ENCODE measurements at regions of chr6 and their contacts with region 1.

Region 1: DNA sequence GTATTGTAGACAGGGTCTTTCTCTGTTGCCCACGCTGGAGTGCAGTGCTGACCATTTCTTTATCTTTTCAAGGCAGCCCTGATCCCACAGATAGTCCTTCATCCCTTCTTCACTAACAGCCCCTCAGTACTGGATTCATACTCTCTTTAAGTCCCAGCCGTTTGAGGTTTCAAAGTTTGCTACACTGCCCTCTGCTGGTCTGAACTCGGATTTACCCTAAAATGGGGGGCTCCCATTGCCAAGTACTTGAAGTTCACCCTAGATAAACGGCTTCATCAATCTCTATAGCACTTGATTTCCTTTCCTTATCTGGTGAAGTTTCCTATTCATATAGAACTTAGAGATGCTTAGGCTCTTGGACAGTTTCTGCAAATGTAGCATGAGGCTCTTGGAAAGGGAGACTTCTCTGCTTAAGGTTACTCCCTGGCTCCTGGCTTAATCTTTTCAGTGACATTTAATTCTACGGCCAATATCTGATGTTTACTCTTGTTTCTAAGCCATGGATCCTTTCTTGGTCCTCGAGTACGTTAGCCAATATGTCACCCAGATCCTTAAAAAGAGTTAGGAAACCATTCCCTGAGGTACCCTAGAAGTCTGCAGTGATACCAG is 21.4 kb upstream of the PREP start:
- H3K4me3 Mint-ChIP-seq: no peak overlapping the region
- H3K27ac Mint-ChIP-seq: no peak overlapping the region
- H3K4me1 Mint-ChIP-seq: no peaks in the 10 kb centered on the region
- H3K27me3 Mint-ChIP-seq: peaks cover 2% of the 10 kb centered on the region

Region 2: GRCh38 chr6:105087571-105088211 is 336.6 kb before region 1 on chr6:
- intact Hi-C with region 1: loop called (anchors 1 kb)
- H3K4me3 Mint-ChIP-seq: no peak overlapping the region
- H3K27ac Mint-ChIP-seq: no peak overlapping the region
- H3K4me1 Mint-ChIP-seq: peaks cover 6% of the 10 kb centered on the region
- H3K27me3 Mint-ChIP-seq: peaks cover 4% of the 10 kb centered on the region

Region 3: DNA sequence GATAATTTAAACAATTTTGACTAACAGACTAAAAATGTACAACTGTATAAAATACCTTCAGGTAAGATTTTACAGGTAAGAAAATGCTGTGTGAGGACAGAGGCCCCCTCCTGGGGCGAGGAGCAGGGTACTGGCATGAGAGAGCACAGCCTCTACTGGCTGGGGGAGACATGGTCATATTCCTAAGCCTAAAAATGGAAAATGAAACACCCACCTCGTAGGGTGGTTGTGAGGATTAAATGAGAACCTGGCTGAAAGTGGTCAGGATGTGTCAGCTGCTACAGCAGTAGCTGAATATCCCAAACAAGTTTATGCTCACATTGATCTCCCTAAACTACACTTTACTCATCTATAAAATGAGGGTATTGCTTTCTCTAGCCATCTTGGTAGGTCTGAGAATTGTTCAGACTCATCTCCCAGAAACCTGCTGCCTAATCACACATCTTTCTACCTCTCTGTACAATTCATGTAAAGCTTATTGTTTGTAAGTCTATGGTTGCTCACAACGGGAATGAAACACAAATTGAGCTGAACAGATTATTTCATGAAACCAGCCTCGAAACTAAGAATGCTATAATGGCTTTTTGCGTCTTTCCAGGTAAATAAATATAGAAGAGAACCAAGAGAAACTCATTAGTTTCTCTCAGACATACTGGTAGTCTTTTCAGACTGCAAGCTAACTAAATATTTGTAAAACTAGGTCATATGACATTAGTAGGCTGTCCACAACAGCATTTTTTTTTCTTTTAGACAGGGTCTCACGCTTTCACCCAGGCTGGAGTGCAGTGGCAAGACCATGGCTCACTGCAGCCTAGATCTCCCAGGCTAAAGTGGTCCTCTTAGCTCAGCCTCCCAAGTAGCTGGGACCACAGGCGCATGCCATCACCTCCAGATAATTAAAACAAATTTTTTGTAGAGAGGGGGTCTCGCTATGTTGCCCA is 314.1 kb before region 1 on chr6:
- intact Hi-C with region 1: no loop called
- H3K4me3 Mint-ChIP-seq: no peak overlapping the region
- H3K27ac Mint-ChIP-seq: no peak overlapping the region
- H3K4me1 Mint-ChIP-seq: no peaks in the 10 kb centered on the region
- H3K27me3 Mint-ChIP-seq: peaks cover 5% of the 10 kb centered on the region

Measured in dendritic cell treated with granulocyte-macrophage colony-stimulating factor and Interleukin-4, amounts not matched to agents 40 ng/mL and 50 ng/mL, for 4 days (primary cell).